ENCODE measurements at regions of chr16 and their contacts with region 1.

Region 1: GRCh38 chr16:1991948-1992703 is 2.4 kb downstream of the SYNGR3 start:
- DNase-seq: peak; percentile 95 to 99 (median 97)
- ATAC-seq: peak; percentile 88
- H3K4me3 ChIP-seq: peak overlapping the region; percentile 53 to 60
- H3K4me3 Mint-ChIP-seq: peak overlapping the region; percentile 39
- H3K27ac ChIP-seq: peak overlapping the region; percentile 27 to 45
- H3K27ac Mint-ChIP-seq: peak overlapping the region; percentile 80
- H3K4me1 ChIP-seq: peaks cover 19% of the 10 kb centered on the region
- H3K4me1 Mint-ChIP-seq: peaks cover 26% of the 10 kb centered on the region
- H3K27me3 ChIP-seq: peaks cover 9 to 13% of the 10 kb centered on the region in 2 experiments
- H3K27me3 Mint-ChIP-seq: peaks cover 9% of the 10 kb centered on the region
- CTCF ChIP-seq: no peak

Region 2: DNA sequence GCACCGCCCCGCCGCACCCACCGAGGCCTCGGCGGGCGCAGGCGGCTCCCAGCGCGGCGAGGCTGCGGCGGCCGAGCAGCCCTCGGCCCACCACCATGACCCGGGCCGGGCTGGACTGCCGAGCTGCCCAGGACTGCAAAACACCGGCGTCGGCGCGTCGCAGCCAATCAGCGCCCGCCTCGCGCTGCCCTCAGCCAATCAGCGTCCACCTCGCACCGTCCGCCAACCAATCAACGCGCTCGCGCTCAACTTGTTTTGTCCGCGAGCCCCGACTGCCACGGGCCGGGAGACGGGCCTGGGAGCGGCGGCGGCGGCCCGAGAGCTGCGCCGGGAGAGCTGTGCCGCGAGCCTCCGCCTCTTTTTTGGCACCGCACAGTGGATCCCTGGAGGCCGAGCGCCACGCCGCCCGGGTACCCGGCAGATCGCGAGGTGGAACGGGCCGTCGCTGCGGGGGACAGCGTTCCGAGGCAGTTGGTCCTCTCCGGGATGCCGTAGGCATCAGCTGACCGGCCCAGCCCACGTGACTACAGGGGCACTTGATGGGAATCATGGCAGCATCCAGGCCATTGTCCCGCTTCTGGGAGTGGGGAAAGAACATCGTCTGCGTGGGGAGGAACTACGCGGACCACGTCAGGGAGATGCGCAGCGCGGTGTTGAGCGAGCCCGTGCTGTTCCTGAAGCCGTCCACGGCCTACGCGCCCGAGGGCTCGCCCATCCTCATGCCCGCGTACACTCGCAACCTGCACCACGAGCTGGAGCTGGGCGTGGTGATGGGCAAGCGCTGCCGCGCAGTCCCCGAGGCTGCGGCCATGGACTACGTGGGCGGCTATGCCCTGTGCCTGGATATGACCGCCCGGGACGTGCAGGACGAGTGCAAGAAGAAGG is 165.2 kb before region 1 on chr16 and contains the starts of genes FAHD1 and HAGH:
- CTCF ChIA-PET with region 1: no interaction called
- POLR2A ChIA-PET with region 1: no interaction called
- intact Hi-C with region 1: no loop called
- DNase-seq: peak; percentile 83 to 96 (median 89)
- ATAC-seq: peak; percentile 79
- H3K4me3 ChIP-seq: peak within 1 kb of the TSS; percentile 72 to 91
- H3K4me3 Mint-ChIP-seq: peak within 1 kb of the TSS; percentile 90
- H3K27ac ChIP-seq: peak within 1 kb of the TSS; percentile 73 to 78
- H3K27ac Mint-ChIP-seq: peak within 1 kb of the TSS; percentile 95
- H3K4me1 ChIP-seq: peaks cover 46% of the 10 kb centered on the region
- H3K4me1 Mint-ChIP-seq: peaks cover 48% of the 10 kb centered on the region
- H3K27me3 ChIP-seq: no peaks in the 10 kb centered on the region
- H3K27me3 Mint-ChIP-seq: no peaks in the 10 kb centered on the region
- CTCF ChIP-seq: no peak
- total RNA-seq, gene FAHD1: 11.7 to 13.7 TPM
- total RNA-seq, gene HAGH: 32.5 to 41.1 TPM

Region 3: GRCh38 chr16:1959269-1960049 is 32.7 kb before region 1 on chr16 and contains the start of gene NDUFB10:
- CTCF ChIA-PET with region 1: no interaction called
- POLR2A ChIA-PET with region 1: interaction called, 20 read pairs
- intact Hi-C with region 1: loop called (anchors 1 kb)
- DNase-seq: peak; percentile 80 to 96 (median 92)
- ATAC-seq: peak; percentile 86
- H3K4me3 ChIP-seq: peak within 1 kb of the TSS; percentile 91 to 95
- H3K4me3 Mint-ChIP-seq: peak within 1 kb of the TSS; percentile 90
- H3K27ac ChIP-seq: peak within 1 kb of the TSS; percentile 75 to 80
- H3K27ac Mint-ChIP-seq: peak within 1 kb of the TSS; percentile 89
- H3K4me1 ChIP-seq: peaks cover 39% of the 10 kb centered on the region
- H3K4me1 Mint-ChIP-seq: peaks cover 39% of the 10 kb centered on the region
- H3K27me3 ChIP-seq: no peaks in the 10 kb centered on the region
- H3K27me3 Mint-ChIP-seq: no peaks in the 10 kb centered on the region
- CTCF ChIP-seq: peak; percentile 59
- total RNA-seq, gene NDUFB10: 36.2 to 38.4 TPM

Region 4: GRCh38 chr16:1964506-1965395 is 27.4 kb before region 1 on chr16 and contains the start of gene RPS2:
- CTCF ChIA-PET with region 1: no interaction called
- POLR2A ChIA-PET with region 1: interaction called, 20 read pairs
- intact Hi-C with region 1: loop called (anchors 1 kb)
- DNase-seq: peak; percentile 92 to 99 (median 98)
- ATAC-seq: peak; percentile 89
- H3K4me3 ChIP-seq: peak within 1 kb of the TSS; percentile 82 to 99
- H3K4me3 Mint-ChIP-seq: peak within 1 kb of the TSS; percentile 94
- H3K27ac ChIP-seq: peak within 1 kb of the TSS; percentile 98 to 99
- H3K27ac Mint-ChIP-seq: peak within 1 kb of the TSS; percentile 96
- H3K4me1 ChIP-seq: peaks cover 41% of the 10 kb centered on the region
- H3K4me1 Mint-ChIP-seq: peaks cover 45% of the 10 kb centered on the region
- H3K27me3 ChIP-seq: no peaks in the 10 kb centered on the region
- H3K27me3 Mint-ChIP-seq: no peaks in the 10 kb centered on the region
- CTCF ChIP-seq: no peak
- total RNA-seq, gene RPS2: 4,060 to 4,094 TPM

Region 5: GRCh38 chr16:2003827-2004641 is 11.9 kb after region 1 on chr16:
- CTCF ChIA-PET with region 1: interaction called, 13 read pairs
- POLR2A ChIA-PET with region 1: interaction called, 4 read pairs
- intact Hi-C with region 1: loop called (anchors 1 kb)
- DNase-seq: peak; percentile 69 to 91 (median 86)
- ATAC-seq: peak; percentile 98
- H3K4me3 ChIP-seq: no peak overlapping the region
- H3K4me3 Mint-ChIP-seq: no peak overlapping the region
- H3K27ac ChIP-seq: no peak overlapping the region
- H3K27ac Mint-ChIP-seq: no peak overlapping the region
- H3K4me1 ChIP-seq: peaks cover 50% of the 10 kb centered on the region
- H3K4me1 Mint-ChIP-seq: peaks cover 36% of the 10 kb centered on the region
- H3K27me3 ChIP-seq: no peaks in the 10 kb centered on the region
- H3K27me3 Mint-ChIP-seq: no peaks in the 10 kb centered on the region
- CTCF ChIP-seq: peak; percentile 67

Measured in CD8-positive, alpha-beta T cell (primary cell).